ENCODE measurements at regions of chr11 and their contacts with region 1.

Region 1: DNA sequence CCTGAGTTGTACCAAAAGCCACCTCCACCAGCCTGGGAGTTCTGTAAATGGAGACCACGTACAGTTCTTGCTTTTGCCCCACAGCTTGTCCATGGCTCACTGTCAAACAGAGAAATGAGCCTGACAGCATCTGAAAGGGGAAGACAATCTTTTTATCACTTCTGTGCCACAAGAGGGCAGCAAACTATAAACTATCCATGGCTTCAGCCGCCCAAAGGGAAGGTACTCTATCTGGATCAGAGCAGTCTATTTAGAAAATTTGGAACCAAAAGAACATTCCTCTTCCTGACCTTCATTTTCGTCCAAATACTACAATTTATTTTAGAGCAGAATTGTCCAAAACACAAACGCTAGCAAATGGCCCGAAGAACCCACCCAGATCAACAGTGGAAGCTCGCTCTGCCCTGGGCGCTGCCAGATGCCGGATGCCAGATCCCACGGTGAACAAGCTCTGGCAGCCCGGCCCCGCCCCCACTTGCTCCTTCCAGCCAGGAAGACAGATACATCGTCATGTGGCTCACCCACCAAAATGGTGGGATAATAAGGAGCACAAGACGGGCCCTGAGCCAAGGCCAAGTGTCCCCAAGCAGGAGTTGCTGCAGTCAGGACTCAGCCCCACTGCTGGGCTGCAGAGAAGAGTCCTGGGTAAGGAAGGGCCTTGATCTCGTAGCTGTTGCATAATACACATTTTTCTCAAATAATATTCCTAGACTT is 23.9 kb upstream of the SCGB1A1 start:
- DNase-seq: peak; percentile 57 to 90 (median 66)
- ATAC-seq: peak; percentile 74
- H3K4me3 ChIP-seq: no peak overlapping the region
- H3K27ac ChIP-seq: no peak overlapping the region
- H3K4me1 ChIP-seq: peaks cover 55 to 66% of the 10 kb centered on the region in 2 experiments
- H3K27me3 ChIP-seq: no peaks in the 10 kb centered on the region
- CTCF ChIP-seq: peak; percentile 74 to 89 (median 86)
- EP300 ChIP-seq: no peak
- POLR2A ChIP-seq: no peak
- RAD21 ChIP-seq: peak; percentile 86 to 94

Region 2: GRCh38 chr11:62186195-62186594 is 208.8 kb before region 1 on chr11:
- CTCF ChIA-PET with region 1: no interaction called
- POLR2A ChIA-PET with region 1: no interaction called
- in situ Hi-C with region 1: no loop called
- intact Hi-C with region 1: no loop called
- DNase-seq: no peak
- ATAC-seq: no peak
- H3K4me3 ChIP-seq: no peak overlapping the region
- H3K27ac ChIP-seq: no peak overlapping the region
- H3K4me1 ChIP-seq: no peaks in the 10 kb centered on the region
- H3K27me3 ChIP-seq: peaks cover 29 to 36% of the 10 kb centered on the region in 2 experiments
- CTCF ChIP-seq: no peak
- EP300 ChIP-seq: no peak
- POLR2A ChIP-seq: no peak
- RAD21 ChIP-seq: no peak

Region 3: GRCh38 chr11:62383822-62384221 is 11.2 kb before region 1 on chr11:
- CTCF ChIA-PET with region 1: interaction called, 6 read pairs
- POLR2A ChIA-PET with region 1: interaction called, 3 read pairs
- in situ Hi-C with region 1: no loop called
- intact Hi-C with region 1: loop called (anchors 1 kb)
- DNase-seq: no peak
- ATAC-seq: no peak
- H3K4me3 ChIP-seq: no peak overlapping the region
- H3K27ac ChIP-seq: no peak overlapping the region
- H3K4me1 ChIP-seq: peaks cover 4 to 7% of the 10 kb centered on the region in 2 experiments; a peak in 3 of 5 replicates
- H3K27me3 ChIP-seq: no peaks in the 10 kb centered on the region
- CTCF ChIP-seq: no peak
- EP300 ChIP-seq: no peak
- POLR2A ChIP-seq: no peak
- RAD21 ChIP-seq: no peak

Region 4: DNA sequence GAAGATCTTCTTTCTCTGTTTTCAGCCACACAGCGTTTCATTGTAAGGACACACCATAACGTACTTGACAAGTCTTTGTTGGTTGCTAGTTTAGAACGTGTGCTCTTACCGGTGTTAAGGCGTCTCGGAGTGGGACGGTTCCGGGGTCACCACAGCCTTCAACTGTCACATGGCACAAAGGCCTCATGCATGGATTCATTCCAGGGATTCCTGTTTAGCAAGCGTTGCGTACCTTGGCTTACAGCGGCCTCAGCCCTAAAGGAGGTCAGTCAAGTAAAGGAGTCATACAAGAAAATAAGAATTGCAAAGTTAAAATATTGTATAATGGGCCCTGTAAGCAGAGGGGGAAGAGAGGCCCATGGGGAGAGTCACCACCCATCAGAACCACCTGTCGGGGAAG is 21.6 kb after region 1 on chr11:
- CTCF ChIA-PET with region 1: no interaction called
- POLR2A ChIA-PET with region 1: no interaction called
- in situ Hi-C with region 1: no loop called
- intact Hi-C with region 1: no loop called
- DNase-seq: no peak
- ATAC-seq: no peak
- H3K4me3 ChIP-seq: no peak overlapping the region
- H3K27ac ChIP-seq: no peak overlapping the region
- H3K4me1 ChIP-seq: peaks cover 23 to 25% of the 10 kb centered on the region in 2 experiments
- H3K27me3 ChIP-seq: no peaks in the 10 kb centered on the region
- CTCF ChIP-seq: no peak
- EP300 ChIP-seq: no peak
- POLR2A ChIP-seq: no peak
- RAD21 ChIP-seq: no peak

Region 5: DNA sequence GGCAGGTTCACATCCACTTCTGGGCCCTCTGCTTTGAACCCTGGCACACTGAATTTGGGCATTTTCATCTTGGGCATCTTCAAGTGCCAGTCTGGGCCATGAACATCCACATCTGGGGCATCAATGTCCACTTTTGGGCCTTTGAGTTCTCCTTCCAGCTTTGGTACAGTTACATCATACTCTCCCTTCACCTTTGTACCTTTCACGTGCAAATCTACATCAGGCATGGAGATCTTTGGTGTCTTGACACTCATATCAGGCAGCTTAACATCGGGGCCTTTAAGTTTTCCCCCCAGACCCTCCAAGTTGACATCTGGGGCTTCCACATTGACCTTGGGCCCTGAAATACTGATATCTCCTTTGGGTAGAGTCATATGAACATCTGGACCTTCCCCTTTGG is 137.1 kb after region 1 on chr11:
- CTCF ChIA-PET with region 1: no interaction called
- POLR2A ChIA-PET with region 1: no interaction called
- in situ Hi-C with region 1: no loop called
- intact Hi-C with region 1: no loop called
- DNase-seq: no peak
- ATAC-seq: no peak
- H3K4me3 ChIP-seq: no peak overlapping the region
- H3K27ac ChIP-seq: no peak overlapping the region
- H3K4me1 ChIP-seq: peaks cover 0 to 5% of the 10 kb centered on the region in 2 experiments; a peak in 1 of 5 replicates
- H3K27me3 ChIP-seq: no peaks in the 10 kb centered on the region
- CTCF ChIP-seq: no peak
- EP300 ChIP-seq: no peak
- POLR2A ChIP-seq: no peak
- RAD21 ChIP-seq: no peak

Region 6: DNA sequence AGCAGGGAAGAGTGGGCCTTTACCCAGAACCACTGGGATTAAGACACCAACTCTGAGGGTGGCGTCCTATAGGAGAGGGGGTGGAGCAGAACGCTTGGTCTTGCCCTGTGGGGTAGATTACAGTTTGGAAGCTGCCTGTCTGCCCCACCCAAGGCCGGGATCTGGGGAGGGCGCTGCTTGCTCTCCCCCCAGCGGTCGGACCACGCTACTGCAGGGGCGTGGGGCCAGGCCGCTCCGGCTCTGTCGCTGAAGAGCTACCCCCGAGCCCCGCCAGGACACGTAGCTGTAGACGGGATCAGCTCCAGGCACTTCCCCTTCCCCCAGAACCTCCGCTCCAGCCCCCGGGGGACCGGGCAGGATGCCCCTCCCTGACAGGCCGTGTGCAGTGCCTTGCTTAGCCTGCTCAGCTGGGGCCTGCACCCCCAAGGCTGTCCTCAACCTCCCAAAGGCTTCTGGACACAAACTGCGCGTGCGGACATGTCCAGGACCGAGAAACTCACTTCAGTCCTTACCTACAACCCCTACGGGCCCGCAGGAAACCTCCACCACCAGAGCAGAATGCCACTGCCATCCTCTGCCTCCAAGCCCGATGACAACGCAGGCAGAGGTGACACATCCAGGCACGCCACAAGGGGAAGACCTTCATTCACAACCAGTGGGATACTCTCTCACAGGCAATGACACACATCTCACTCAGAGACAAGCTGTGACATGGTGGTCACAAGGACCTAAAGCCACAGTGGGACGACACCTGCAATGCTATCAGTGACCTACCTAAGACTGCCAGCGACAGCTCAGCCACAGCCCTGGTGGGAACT is 148.0 kb after region 1 on chr11:
- CTCF ChIA-PET with region 1: interaction called, 8 read pairs
- POLR2A ChIA-PET with region 1: interaction called, 9 read pairs
- in situ Hi-C with region 1: no loop called
- intact Hi-C with region 1: loop called (anchors 1 kb)
- DNase-seq: peak; percentile 83 to 91 (median 87)
- ATAC-seq: peak; percentile 74
- H3K4me3 ChIP-seq: peak overlapping the region; percentile 14; the same call in 1 of the 2 replicates
- H3K27ac ChIP-seq: peak overlapping the region; percentile 27
- H3K4me1 ChIP-seq: peaks cover 77 to 88% of the 10 kb centered on the region in 2 experiments
- H3K27me3 ChIP-seq: no peaks in the 10 kb centered on the region
- CTCF ChIP-seq: peak; percentile 97 to 98 (median 97)
- EP300 ChIP-seq: 0 out of 2 replicates have a peak, but pooled peaks have one; percentile 7
- POLR2A ChIP-seq: no peak
- RAD21 ChIP-seq: peak; percentile 94 to 99

Region 7: DNA sequence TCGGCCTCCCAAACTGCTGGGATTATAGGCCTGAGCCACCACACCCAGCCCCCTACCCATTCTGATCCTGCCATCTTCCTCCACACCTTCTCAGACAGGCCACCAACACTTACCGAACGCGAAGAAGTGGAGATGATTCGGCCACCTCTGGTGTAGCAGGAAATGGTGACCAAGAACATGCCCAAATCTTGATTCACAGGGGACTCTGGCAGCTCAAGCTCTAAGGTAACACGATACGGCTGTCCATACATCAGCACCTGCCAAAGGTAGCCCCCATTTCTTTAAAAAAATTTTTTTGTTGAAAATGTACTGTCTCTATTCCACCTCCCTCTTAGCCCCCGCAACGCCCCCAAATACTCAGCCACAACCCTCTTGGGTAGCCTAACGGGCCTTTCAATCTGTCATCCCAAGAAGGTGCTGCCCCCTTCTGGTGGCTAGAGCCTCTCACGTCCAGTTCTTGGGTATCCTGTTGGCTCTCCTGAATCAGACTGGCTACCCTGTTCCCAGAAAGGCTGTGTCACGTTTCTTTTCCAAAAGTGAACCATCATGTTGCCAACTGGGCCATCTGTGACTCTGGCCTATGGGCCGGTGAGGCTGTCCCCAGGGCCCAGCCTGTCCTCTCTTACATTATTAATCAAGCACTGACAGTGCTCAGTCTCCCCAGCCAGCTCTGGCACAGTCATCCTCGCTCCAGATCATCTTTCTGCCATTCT is 299.6 kb after region 1 on chr11:
- CTCF ChIA-PET with region 1: interaction called, 4 read pairs
- POLR2A ChIA-PET with region 1: no interaction called
- in situ Hi-C with region 1: loop called (anchors 5 kb)
- intact Hi-C with region 1: no loop called
- DNase-seq: peak; percentile 73 to 90 (median 78)
- ATAC-seq: peak; percentile 98
- H3K4me3 ChIP-seq: no peak overlapping the region
- H3K27ac ChIP-seq: no peak overlapping the region; the same call in 2 of the 3 replicates
- H3K4me1 ChIP-seq: no peaks in the 10 kb centered on the region
- H3K27me3 ChIP-seq: no peaks in the 10 kb centered on the region
- CTCF ChIP-seq: peak; percentile 87 to 90 (median 87)
- EP300 ChIP-seq: no peak
- POLR2A ChIP-seq: no peak
- RAD21 ChIP-seq: peak; percentile 77 to 84

Region 8: DNA sequence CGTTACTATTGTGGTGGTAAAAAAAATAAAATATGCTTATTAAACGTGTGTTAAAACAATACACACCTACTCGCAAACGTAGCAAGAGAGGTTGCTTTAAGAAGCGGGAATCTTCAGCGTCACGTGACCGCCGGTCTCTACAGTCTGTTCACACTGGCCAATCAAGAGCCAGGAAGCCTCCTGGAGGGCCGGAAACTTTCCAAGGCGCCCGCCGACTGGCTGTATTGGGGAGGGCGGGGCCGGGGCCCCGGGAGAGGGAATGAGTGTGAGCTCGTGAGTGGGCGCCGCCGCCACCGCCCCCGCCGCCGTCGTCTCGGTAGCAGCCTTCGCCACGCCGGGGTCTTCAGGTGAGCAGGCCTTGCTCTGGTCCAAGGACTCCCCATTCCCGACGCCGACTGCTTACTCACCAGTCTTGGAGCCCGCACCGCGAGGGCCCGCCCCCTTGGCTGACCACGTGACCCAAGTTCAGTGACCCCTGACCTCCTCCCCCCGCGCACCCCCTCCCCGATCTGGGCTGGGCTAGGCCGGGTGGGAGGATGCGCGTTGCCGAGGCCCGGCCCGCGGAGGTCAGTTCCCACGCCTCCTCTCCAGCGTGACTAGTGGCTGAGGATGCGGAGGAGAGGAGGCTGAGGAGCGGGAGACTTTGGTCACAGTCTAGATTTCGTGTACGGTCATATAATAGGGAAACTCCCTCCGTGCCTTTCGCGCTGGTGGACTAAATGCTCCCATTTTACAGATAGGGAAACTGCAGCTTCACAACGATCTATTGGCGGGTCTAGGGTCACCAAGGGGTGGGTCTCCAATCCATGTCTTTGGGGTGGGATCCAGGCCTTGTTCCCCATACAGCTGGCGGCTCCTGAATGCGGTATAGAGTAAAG is 376.4 kb after region 1 on chr11 and contains the start of gene TAF6L:
- CTCF ChIA-PET with region 1: no interaction called
- POLR2A ChIA-PET with region 1: no interaction called
- in situ Hi-C with region 1: no loop called
- intact Hi-C with region 1: loop called (anchors 10 kb)
- DNase-seq: peak; percentile 97 to 99 (median 98)
- ATAC-seq: peak; percentile 95
- H3K4me3 ChIP-seq: peak within 1 kb of the TSS; percentile 48
- H3K27ac ChIP-seq: peak within 1 kb of the TSS; percentile 88
- H3K4me1 ChIP-seq: peaks cover 9 to 24% of the 10 kb centered on the region in 2 experiments
- H3K27me3 ChIP-seq: no peaks in the 10 kb centered on the region
- CTCF ChIP-seq: no peak; a peak in 1 of 6 replicates
- EP300 ChIP-seq: no peak; the same call in 1 of the 2 replicates
- POLR2A ChIP-seq: peak; percentile 86
- RAD21 ChIP-seq: peak in 1 of 2 experiments; percentile 20; a peak in 2 of 4 replicates
- polyA plus RNA-seq, gene TAF6L: 0.04 to 0.25 TPM

Region 9: DNA sequence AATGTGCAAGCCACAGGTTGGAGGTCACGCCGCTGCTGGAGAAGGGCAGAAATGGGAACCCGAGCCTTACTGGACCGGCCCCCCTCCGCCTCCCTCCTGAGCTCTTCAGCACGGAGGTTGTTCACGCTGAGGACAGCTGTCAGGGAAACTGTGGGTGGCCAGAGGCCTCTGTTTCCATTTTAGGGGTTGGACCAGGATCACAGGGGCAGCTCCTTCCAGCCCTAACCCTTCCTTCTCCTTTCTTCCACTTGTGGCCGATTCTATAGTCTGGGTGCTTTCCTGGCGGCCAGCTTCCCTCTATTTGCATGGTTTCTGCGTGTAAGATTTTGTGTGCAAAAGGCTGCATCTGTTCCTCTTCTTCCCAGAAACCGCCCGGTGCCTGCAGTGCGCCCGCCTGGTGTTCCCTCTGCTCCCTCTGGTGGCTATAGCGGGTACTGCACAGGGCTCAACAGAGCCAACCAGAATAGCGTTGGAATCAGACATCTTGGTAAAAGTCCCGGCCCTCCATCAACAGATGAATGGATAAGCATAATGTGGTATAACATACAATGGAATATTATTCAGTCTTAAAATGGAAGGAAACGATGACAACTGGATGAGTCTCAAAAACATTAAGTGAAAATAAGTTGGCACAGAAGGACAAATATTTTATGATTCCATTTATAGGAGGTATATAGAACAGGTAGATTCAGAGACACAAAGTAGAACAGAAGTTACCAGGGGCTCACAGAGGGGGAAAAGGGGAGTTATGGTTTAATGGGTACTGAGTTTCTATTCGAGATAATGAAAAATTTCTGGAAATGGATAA is 629.1 kb after region 1 on chr11:
- CTCF ChIA-PET with region 1: no interaction called
- POLR2A ChIA-PET with region 1: no interaction called
- in situ Hi-C with region 1: loop called (anchors 25 kb)
- intact Hi-C with region 1: no loop called
- DNase-seq: peak; percentile 80 to 83 (median 82)
- ATAC-seq: peak; percentile 94
- H3K4me3 ChIP-seq: no peak overlapping the region
- H3K27ac ChIP-seq: no peak overlapping the region
- H3K4me1 ChIP-seq: peaks cover 0 to 8% of the 10 kb centered on the region in 2 experiments; a peak in 2 of 5 replicates
- H3K27me3 ChIP-seq: peaks cover 3 to 45% of the 10 kb centered on the region in 2 experiments; a peak in 3 of 5 replicates
- CTCF ChIP-seq: peak; percentile 95 to 99 (median 98)
- EP300 ChIP-seq: no peak
- POLR2A ChIP-seq: no peak
- RAD21 ChIP-seq: peak; percentile 94

Region 10: DNA sequence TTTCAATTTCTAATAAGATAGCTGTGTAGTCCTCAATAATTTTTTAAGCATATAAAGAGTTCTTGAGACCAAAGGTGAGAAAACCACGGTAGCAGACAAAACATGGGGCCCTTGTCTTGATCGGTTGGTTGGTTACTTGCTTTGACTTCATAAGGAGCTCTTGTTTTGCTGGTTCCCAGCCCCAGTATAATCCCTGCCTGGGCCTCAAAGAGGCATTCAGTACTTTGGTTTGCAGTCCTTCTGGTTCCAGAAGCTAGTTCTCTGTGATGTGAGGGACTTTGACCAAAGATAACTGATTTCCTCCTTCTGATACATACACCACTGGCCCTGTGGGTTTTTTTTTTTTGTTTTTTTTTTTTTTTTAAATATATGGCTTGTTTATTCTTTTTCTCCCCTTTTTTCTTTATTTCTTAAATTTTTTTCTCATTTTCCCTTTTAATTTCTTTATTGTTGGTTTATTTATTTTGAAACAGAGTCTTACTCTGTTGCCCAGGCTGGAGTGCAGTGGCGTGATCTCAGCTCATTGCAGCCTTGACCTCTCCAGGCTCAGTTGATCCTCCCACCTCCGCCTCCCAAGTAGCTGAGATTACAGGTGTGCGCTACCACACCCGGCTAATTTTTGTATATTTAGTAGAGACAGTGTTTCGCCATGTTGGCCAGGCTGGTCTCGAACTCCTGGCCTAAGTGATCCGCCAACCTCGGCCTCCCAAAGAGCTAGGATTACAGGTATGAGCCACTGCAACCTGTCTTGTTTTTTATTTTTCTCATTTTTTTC is 1461.2 kb after region 1 on chr11:
- CTCF ChIA-PET with region 1: no interaction called
- POLR2A ChIA-PET with region 1: no interaction called
- in situ Hi-C with region 1: no loop called
- intact Hi-C with region 1: no loop called
- DNase-seq: no peak
- ATAC-seq: peak; percentile 43; the same call in 1 of the 3 replicates
- H3K4me3 ChIP-seq: no peak overlapping the region
- H3K27ac ChIP-seq: no peak overlapping the region
- H3K4me1 ChIP-seq: peaks cover 11 to 18% of the 10 kb centered on the region in 2 experiments; a peak in 4 of 5 replicates
- H3K27me3 ChIP-seq: no peaks in the 10 kb centered on the region
- CTCF ChIP-seq: no peak
- EP300 ChIP-seq: no peak
- POLR2A ChIP-seq: no peak
- RAD21 ChIP-seq: no peak

Measured in K562 (cell line).